OCI-LY7 (cell line): ENCODE measurements at regions of chr17 and their contacts with region 1.

Region 1: GRCh38 chr17:7107795-7108559 is 6.6 kb downstream of the ASGR2 start:
- DNase-seq: no peak
- H3K4me3 ChIP-seq: no peak overlapping the region
- H3K27ac ChIP-seq: no peak overlapping the region
- H3K4me1 ChIP-seq: no peaks in the 10 kb centered on the region
- CTCF ChIP-seq: no peak

Region 2: DNA sequence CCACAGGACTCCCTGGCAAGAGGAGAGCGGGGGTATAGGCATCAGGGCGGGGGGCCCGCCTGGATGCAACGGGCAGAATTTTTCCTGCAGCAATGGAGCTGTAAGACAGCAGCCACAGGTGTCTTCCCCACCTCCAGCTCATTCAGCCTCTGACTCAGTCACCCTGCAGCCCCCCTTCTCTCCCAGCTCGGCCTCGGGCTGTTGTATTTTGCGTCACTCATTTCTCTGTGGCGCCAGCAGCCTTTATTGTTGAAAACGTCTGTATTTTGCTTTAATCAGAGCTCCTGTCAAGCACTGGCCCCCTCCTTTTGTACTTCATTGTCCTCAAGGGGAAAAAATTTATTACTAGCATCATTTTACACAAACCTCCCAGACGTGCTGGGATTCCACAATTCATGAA is 920.1 kb before region 1 on chr17:
- CTCF ChIA-PET with region 1: no interaction called
- POLR2A ChIA-PET with region 1: interaction called, 11 read pairs
- intact Hi-C with region 1: no loop called
- DNase-seq: no peak
- H3K4me3 ChIP-seq: no peak overlapping the region
- H3K27ac ChIP-seq: no peak overlapping the region
- H3K4me1 ChIP-seq: no peaks in the 10 kb centered on the region
- CTCF ChIP-seq: no peak

Region 3: GRCh38 chr17:7214300-7215135 is 106.5 kb after region 1 on chr17:
- CTCF ChIA-PET with region 1: no interaction called
- POLR2A ChIA-PET with region 1: no interaction called
- intact Hi-C with region 1: no loop called
- DNase-seq: peak; percentile 99
- H3K4me3 ChIP-seq: peak overlapping the region; percentile 75
- H3K27ac ChIP-seq: peak overlapping the region; percentile 65
- H3K4me1 ChIP-seq: peaks cover 52% of the 10 kb centered on the region
- CTCF ChIP-seq: peak; percentile 74